Left cardiac atrium (tissue), 4 donors: ENCODE measurements at regions of chr18 and their contacts with region 1.

Region 1: DNA sequence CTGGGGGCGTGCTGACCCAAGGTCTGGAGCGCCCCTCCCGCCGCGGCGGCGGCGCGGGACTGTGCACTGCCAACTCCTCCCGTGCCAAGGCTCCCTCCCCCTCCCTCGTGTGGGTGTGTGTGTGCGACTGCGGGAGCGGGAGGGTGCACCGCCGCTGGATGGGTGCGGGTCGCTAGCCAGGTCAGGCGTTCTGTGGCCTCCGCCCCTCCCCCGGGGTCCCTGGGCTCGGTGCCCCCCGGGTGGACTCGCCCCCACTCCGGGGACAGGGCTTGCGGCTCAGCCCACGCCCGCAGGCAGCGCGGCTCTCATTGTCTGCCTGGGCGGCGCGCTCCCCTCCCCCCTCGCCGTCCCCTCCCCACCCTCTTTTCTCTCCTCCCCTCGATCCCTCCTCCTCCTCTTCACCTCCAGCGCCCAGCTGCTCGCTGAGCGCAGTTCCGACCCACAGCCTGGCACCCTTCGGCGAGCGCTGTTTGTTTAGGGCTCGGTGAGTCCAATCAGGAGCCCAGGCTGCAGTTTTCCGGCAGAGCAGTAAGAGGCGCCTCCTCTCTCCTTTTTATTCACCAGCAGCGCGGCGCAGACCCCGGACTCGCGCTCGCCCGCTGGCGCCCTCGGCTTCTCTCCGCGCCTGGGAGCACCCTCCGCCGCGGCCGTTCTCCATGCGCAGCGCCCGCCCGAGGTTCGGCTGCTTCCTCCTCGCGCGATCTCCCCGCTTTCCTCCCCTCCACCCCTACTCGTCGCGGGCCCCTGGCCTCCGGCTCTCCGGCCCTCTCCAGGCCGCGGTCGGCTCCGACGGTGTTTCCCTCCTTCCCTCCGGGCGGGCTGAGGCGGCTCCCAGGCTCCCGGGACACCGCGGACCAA is at the start of gene GATA6:
- DNase-seq: peak; percentile 95
- ATAC-seq: peak; percentile 73 to 80
- total RNA-seq, gene GATA6: 43.9 to 59.6 TPM

Region 2: DNA sequence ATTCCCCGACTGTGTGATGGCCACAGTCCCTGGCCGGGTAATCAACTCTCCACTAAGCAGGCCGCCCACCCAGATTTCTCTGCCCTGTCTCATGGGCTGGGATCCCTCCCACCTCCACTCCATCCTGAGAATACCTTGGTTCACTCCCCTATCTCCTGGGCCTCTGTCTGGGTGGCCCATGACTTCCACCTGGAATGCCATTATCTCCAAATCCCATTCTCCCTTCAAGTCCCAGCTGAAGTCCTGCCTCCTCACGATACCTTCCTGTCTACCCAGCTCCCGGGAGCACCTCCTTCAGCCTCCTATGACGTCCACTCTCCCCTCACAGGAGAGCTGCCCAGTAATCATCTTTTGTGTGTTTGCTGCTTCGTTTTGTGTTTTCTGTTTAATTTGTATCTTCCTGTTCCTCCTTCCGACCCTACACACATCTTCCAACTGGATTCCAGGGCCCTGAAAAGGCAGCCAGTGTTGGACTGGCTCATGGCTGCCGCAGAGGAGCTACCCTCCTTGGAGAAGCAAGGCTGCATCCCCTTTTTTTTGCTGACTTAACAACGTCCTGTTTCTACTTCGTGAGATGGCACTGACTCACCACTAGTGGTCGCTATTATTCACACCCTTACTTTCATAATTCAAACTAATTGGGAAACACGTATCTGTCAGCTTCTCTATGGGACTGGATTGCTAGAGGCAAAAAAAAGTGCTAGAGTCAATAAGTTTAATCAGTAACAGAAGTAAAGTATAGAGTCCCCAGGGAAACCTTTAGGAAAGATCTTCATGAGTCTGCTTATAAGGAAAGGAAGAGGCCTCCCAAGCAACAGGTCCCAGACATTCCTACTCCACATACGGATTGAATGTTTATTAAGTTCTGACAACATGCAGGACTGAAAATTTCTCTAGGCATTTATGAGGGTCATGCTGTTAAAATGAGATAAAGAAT is 171.8 kb before region 1 on chr18:
- intact Hi-C with region 1: loop called (anchors 2 to 5 kb)
- DNase-seq: no peak
- ATAC-seq: peak; percentile 74 to 77

Region 3: DNA sequence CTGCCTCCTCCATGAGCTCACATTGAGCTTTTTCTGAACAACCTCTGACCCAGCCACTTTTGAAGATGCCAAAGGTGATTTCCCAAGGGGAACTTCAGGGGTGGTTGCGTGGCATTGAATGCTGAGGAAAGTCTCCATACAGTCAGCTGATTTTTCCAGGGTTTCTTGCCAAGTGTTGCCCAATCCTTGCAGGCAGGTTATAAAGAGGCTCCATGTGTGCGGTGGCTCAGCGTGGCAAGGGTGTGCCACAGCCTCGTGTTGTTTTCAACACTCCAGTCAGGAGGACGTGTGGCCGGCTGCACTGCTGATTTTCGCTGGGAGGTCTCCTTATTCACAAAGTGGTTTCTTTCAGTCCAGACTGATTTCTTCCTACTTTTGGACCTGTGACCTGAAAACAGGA is 81.2 kb before region 1 on chr18:
- intact Hi-C with region 1: loop called in 1 of 2 experiments (anchors 5 kb)
- DNase-seq: peak; percentile 31
- ATAC-seq: peak in 1 of 2 donors; percentile 48

Region 4: GRCh38 chr18:22267697-22268096 is 98.5 kb after region 1 on chr18:
- intact Hi-C with region 1: loop called in 1 of 2 experiments (anchors 5 kb)
- DNase-seq: peak; percentile 83
- ATAC-seq: peak; percentile 92

Region 5: DNA sequence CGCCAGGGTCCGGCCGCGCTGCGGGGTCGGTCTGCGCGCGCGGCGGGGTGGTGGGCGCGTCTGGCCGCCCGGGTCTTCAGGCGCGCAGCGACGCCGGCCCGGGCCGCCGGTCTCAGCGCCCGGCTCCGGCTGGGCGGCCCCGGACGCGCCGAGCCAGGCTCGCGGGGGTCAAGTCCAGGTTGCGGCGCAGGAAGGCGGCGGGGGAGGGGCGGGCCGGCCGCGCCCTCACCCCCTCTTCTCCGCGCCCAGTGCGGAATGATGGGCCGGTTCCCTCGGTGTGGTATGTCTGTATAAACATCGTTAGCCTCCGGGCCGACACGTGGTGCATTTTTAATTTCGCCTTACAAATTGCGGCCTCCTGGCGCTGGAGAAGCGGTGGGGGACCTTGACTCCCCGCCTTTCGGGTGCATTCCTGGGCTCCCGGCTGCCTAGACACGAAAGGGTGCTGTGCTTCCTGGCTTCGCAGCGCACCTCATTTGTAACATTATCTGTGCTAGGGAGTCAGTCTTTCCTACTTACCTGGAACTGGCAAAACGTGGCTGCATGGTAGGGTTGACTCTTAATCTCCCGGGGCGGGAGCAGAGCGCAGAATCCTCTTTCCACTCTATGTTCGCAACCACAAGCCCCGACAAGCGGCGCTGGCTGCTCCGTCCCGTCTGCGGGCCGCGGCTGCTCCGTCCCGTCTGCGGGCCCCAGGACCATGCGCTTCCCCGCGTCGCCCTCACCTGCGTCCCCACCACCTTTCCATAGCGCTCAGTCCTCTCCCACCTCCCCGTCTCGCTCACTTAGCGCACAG is 179.5 kb after region 1 on chr18:
- intact Hi-C with region 1: loop called in 1 of 2 experiments (anchors 5 kb)
- DNase-seq: peak; percentile 87
- ATAC-seq: peak; percentile 73 to 79

Region 6: DNA sequence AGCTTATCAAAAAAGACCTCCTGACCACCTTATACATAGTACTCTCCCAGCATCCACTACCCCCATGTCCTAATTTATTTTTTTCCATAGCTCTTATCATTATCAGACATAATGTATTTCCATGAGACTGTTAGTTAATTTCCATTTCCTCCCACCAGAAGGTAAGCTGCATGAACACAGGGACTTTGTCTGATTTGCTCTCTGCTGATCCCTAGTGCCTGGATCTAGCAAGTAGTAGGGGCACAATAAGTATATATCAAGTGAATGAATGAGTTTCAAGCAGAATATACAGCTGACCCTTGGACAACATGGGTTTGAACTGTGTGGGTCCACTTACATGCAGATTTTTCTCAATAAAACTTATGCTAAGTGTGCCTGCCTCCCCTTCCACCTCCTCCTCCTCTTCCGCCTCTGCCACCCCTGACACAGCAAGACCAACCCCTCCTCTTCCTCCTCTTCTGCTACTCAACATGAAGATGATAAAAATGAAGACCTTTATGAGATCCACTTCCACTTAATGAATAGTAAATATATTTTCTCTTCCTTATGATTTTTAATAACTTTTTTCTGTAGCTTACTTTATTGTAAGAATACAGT is 194.7 kb after region 1 on chr18:
- intact Hi-C with region 1: loop called in 1 of 2 experiments (anchors 10 kb)
- DNase-seq: no peak
- ATAC-seq: peak; percentile 49 to 70